Heart left ventricle (tissue), 16 donors: ENCODE measurements at regions of chr1 and their contacts with region 1.

Region 1: GRCh38 chr1:32828341-32828740 is 10.9 kb downstream of the S100PBP start:
- DNase-seq: no peak
- ATAC-seq: no peak
- H3K4me3 ChIP-seq: no peak overlapping the region
- H3K27ac ChIP-seq: no peak overlapping the region
- H3K4me1 ChIP-seq: no peaks in the 10 kb centered on the region
- H3K27me3 ChIP-seq: no peaks in the 10 kb centered on the region
- CTCF ChIP-seq: peak in 6 of 12 donors; percentile 6 to 43 (median 32)
- POLR2A ChIP-seq: no peak

Region 2: DNA sequence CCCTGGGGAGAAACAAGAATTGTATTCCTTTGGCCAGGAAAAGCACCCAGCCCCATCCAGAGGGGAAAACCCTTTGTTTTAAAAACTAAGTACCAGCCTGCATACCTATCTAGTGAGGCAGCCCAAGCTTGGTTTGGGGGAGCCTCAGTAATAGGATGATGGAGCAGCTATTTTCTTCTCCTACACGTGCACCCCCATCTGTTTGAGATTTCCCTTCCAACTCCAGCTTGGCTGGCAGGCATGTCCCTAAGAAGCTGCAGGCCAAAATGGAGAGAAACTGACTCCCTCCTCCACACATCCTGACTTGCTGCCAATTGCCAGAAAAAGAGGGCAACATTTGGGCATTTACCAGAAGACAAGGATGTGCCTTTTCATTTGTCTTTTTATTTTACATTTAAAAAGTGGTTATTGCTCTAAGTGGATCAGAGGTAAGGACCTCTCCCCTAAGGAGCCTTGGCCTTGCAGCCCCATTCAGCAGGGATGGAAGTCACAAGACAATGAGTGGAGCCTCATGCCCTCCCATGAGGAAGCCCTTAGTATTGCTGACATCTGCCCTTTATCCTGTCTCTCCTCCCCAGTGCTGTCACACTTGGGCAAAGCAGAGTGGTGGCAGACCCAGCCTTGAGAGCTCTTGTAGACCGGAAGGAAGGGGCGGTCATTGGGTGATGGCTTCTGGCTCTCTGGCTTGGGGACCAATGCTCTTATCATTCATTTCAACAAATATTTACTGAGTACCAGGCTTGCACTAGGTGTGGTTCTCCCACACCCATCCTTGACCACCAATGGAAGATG is 33.8 kb after region 1 on chr1:
- intact Hi-C with region 1: loop called in 2 of 10 experiments (anchors 5 kb)
- DNase-seq: no peak
- ATAC-seq: peak in 1 of 4 donors; percentile 11
- H3K4me3 ChIP-seq: no peak overlapping the region
- H3K27ac ChIP-seq: peak overlapping the region in 1 of 12 donors; percentile 40
- H3K4me1 ChIP-seq: peaks cover 0 to 45% (median 25%) of the 10 kb centered on the region in 12 donors
- H3K27me3 ChIP-seq: no peaks in the 10 kb centered on the region
- CTCF ChIP-seq: no peak
- POLR2A ChIP-seq: no peak

Region 3: GRCh38 chr1:33086384-33086850 is 258.1 kb after region 1 on chr1:
- intact Hi-C with region 1: loop called in 2 of 10 experiments (anchors 2 to 5 kb)
- DNase-seq: peak; percentile 74 to 84 (median 77)
- ATAC-seq: peak; percentile 66 to 89 (median 86)
- H3K4me3 ChIP-seq: no peak overlapping the region
- H3K27ac ChIP-seq: no peak overlapping the region
- H3K4me1 ChIP-seq: peaks cover 0 to 23% (median 4%) of the 10 kb centered on the region in 12 donors
- H3K27me3 ChIP-seq: peaks cover 0 to 7% (median 0%) of the 10 kb centered on the region in 9 donors
- CTCF ChIP-seq: peak; percentile 66 to 86 (median 77)
- POLR2A ChIP-seq: no peak